A549 (cell line): ENCODE measurements at regions of chr1 and their contacts with region 1.

Region 1: GRCh38 chr1:204989266-204990058 is 53.5 kb upstream of the CNTN2 start:
- DNase-seq: peak; percentile 63 to 96
- ATAC-seq: peak; percentile 76 to 90
- H3K4me3 ChIP-seq: no peak overlapping the region
- H3K27ac ChIP-seq: no peak overlapping the region
- H3K4me1 ChIP-seq: no peaks in the 10 kb centered on the region
- CTCF ChIP-seq: peak; percentile 93
- EP300 ChIP-seq: no peak
- POLR2A ChIP-seq: no peak
- RAD21 ChIP-seq: peak; percentile 92 to 97

Region 2: DNA sequence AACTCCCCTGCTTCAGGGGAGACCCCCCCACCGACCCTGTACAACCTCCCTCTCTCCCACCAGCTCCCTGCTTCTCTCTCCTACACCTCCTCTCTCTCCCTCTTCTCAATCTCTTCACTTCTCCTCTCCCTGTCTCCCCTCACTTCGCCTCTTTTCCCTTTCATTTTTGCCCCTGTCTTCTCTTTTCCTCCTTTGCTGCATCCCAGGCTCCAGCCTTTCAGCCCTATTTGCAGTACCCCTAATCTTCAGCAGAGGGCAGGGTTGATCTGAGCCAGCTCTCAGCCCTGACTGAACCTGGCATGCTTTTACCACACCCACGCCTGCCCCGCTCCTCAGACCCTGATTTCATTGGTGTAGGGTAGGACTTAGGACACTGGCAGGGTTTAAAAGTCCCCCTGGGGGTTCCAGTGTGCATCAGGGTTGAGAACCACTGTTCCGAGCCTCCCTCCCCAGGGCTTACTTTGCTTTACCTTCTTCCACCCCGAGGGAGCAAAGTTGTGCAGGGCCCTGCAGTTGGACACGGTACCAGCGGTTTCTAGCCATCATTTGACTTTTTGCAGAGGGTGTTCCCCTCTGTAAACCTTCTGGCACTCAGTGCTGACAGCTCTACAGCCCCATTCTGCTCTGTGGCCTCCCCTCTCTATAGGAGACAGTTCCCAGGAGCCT is 13.8 kb before region 1 on chr1:
- CTCF ChIA-PET with region 1: interaction called, 105 read pairs
- POLR2A ChIA-PET with region 1: no interaction called
- DNase-seq: peak; percentile 41 to 91
- ATAC-seq: peak; percentile 78 to 93
- H3K4me3 ChIP-seq: no peak overlapping the region
- H3K27ac ChIP-seq: no peak overlapping the region
- H3K4me1 ChIP-seq: peaks cover 12% of the 10 kb centered on the region
- CTCF ChIP-seq: peak; percentile 60
- EP300 ChIP-seq: no peak
- POLR2A ChIP-seq: no peak
- RAD21 ChIP-seq: peak; percentile 71 to 79

Region 3: GRCh38 chr1:205048382-205048781 is 58.9 kb after region 1 on chr1:
- CTCF ChIA-PET with region 1: interaction called, 32 read pairs
- POLR2A ChIA-PET with region 1: no interaction called
- DNase-seq: no peak
- ATAC-seq: no peak
- H3K4me3 ChIP-seq: no peak overlapping the region
- H3K27ac ChIP-seq: no peak overlapping the region
- H3K4me1 ChIP-seq: peaks cover under 1% of the 10 kb centered on the region; the same call in 1 of the 3 replicates
- CTCF ChIP-seq: no peak
- EP300 ChIP-seq: no peak
- POLR2A ChIP-seq: no peak
- RAD21 ChIP-seq: no peak

Region 4: GRCh38 chr1:205082431-205082830 is 93.0 kb after region 1 on chr1:
- CTCF ChIA-PET with region 1: interaction called, 15 read pairs
- POLR2A ChIA-PET with region 1: no interaction called
- DNase-seq: no peak
- ATAC-seq: no peak
- H3K4me3 ChIP-seq: no peak overlapping the region
- H3K27ac ChIP-seq: no peak overlapping the region
- H3K4me1 ChIP-seq: no peaks in the 10 kb centered on the region
- CTCF ChIP-seq: no peak
- EP300 ChIP-seq: no peak
- POLR2A ChIP-seq: no peak
- RAD21 ChIP-seq: no peak

Region 5: DNA sequence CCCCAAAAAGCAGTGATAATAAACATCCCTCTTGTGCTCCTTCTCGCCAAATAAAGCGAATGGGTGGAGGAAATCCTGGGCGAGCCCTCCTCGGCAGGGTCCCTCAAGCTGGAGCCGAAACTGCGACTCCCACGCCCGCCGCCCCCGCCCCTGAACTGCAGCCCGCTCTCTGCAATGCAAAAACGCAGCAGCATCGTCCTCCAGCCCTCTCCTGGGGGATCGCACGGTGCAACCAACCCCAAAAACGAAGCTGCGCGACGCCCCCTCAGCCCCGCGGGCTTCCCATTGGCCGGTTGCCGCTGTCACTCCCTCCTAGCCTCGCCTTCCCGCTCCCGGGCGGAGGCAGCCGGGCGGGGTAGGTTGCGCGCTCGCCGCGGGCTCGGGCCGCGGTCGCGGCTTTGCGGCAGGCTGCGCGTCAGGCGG is 238.1 kb after region 1 on chr1 and contains the start of gene TMCC2:
- CTCF ChIA-PET with region 1: interaction called, 10 read pairs
- POLR2A ChIA-PET with region 1: no interaction called
- DNase-seq: peak; percentile 84 to 97
- ATAC-seq: peak; percentile 83 to 92
- H3K4me3 ChIP-seq: peak within 1 kb of the TSS; percentile 69
- H3K27ac ChIP-seq: peak within 1 kb of the TSS; percentile 64 to 88
- H3K4me1 ChIP-seq: peaks cover 12% of the 10 kb centered on the region; the same call in 2 of the 3 replicates
- CTCF ChIP-seq: no peak
- EP300 ChIP-seq: no peak
- POLR2A ChIP-seq: peak; percentile 51
- RAD21 ChIP-seq: no peak; a peak in 1 of 5 replicates
- polyA plus RNA-seq, gene TMCC2: 1.6 and 1.7 TPM in 2 replicates

Region 6: DNA sequence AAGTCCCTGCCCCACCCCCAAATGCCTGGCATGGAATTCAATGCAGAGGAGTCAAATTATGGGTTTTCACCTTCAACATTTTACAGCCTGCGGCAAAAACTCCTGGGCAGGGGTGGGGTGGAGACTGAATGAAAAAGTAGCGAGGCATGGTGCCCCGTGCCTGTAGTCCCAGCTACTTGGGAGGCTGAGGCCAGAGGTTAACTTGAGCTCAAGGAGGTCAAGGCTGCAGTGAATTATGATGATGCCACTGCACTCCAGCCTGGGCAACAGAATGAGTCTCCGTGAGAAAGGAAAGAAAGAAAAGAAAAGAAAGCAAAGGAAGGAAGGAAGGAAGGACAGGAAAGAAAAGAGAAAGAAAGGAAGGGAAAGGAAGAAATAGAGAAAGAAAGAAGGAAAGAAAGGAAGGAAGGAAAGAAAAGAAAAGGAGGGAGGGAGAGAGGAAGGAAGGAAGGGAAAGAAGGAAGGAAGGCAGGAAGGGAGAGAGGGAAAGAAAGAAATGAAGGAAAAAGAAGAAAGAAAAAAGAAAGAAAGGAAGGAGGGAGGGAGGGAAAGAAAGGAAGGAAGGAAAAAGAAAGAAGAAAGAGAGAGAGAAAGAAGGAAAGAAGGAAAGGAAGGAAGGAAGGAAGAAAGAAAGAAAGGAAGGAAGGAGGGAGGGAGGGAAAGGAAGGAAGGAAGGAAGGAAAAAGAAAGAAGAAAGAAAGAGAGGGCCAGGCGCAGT is 421.3 kb after region 1 on chr1:
- CTCF ChIA-PET with region 1: no interaction called
- POLR2A ChIA-PET with region 1: no interaction called
- DNase-seq: no peak
- ATAC-seq: no peak
- H3K4me3 ChIP-seq: no peak overlapping the region
- H3K27ac ChIP-seq: no peak overlapping the region
- H3K4me1 ChIP-seq: no peaks in the 10 kb centered on the region
- CTCF ChIP-seq: no peak
- EP300 ChIP-seq: no peak
- POLR2A ChIP-seq: no peak
- RAD21 ChIP-seq: no peak